ENCODE measurements at regions of chr6 and their contacts with region 1.

Region 1: GRCh38 chr6:39843305-39844020 is 51.3 kb downstream of the DAAM2 start:
- DNase-seq: no peak
- H3K4me3 ChIP-seq: no peak overlapping the region
- H3K27ac ChIP-seq: no peak overlapping the region
- H3K4me1 ChIP-seq: peaks cover 9% of the 10 kb centered on the region
- H3K27me3 ChIP-seq: no peaks in the 10 kb centered on the region
- CTCF ChIP-seq: no peak
- EP300 ChIP-seq: no peak
- POLR2A ChIP-seq: no peak

Region 2: DNA sequence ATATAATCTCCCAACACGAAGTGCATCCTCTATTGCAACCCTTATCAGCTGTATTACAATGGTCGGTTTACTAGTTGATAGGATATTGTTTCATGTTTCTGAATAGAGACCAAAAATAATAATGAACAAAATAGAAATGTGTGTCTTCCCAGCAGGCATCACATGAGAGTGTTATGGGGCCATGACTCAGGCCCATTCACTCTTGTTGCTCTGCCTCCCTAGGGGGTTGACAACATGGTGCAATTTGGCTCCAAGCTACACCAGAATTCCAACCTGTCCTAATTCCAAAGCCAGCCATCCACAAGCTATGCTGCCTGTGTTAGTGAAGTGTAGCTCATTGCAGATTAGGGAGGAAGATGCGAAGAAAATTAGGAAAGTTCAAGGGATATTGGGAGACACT is 715.4 kb before region 1 on chr6:
- intact Hi-C with region 1: loop called in 1 of 4 experiments (anchors 10 kb)
- DNase-seq: no peak
- H3K4me3 ChIP-seq: no peak overlapping the region
- H3K27ac ChIP-seq: no peak overlapping the region
- H3K4me1 ChIP-seq: no peaks in the 10 kb centered on the region
- H3K27me3 ChIP-seq: no peaks in the 10 kb centered on the region
- CTCF ChIP-seq: no peak
- EP300 ChIP-seq: no peak
- POLR2A ChIP-seq: no peak

Region 3: DNA sequence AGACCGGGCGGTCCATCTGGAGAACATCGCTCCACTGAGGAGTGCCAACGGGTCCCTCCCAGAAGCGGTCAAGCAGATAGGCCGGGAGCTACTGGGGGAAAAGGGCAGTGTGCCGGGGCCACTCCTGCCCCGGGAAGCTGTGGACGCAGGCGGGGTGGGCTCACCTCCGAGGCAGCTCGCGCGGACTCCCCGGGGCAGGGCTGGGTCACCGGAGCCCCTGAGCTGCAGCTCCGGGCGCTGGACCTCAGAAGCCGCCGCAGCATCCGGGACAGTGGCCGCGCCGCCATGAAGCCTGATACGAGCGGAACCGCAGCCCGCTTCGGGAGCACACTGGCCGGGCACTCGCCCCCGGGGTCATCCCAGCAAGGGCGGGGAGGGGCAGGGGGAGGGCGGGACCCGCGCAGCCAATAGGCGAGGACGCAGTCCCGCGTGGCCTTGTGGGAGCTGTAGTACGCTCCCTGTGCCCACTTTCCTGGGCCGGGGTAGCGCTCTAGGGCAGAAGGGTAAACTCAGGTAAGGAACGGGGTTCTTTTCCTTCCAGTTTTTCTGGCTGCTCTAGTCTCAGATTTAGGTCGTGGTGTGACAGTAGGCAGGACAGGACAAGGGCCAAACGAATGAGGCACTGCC is 90.8 kb after region 1 on chr6 and contains the start of gene MOCS1:
- intact Hi-C with region 1: no loop called
- DNase-seq: peak; percentile 82 to 90 (median 86)
- H3K4me3 ChIP-seq: peak within 1 kb of the TSS; percentile 86
- H3K27ac ChIP-seq: peak within 1 kb of the TSS; percentile 81 to 85
- H3K4me1 ChIP-seq: peaks cover 4% of the 10 kb centered on the region
- H3K27me3 ChIP-seq: no peaks in the 10 kb centered on the region
- CTCF ChIP-seq: no peak
- EP300 ChIP-seq: no peak
- POLR2A ChIP-seq: peak; percentile 56
- total RNA-seq, gene MOCS1: 10.9 to 21.8 (median 17.2) TPM